T-cell (primary cell): ENCODE measurements at regions of chr17 and their contacts with region 1.

Region 1: DNA sequence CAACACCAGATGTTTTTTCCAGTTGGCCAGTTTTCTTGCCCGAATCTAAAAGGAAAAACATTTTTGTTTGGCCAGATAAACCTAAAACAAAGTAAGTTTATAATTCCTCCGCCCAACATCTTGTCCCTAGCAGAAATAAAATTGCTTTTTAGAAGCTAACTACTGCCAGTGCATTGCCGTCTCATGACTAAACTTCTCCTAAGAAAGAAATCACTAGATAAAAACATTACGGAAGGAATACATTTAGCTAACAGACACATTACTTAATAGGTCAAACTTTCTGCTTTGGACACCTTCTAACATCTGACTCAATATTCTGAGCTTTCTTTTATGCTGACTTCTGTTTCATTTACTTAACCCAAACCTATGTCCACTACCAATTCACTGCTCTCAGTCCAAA is 36.2 kb downstream of the FBXL20 start:
- DNase-seq: no peak
- ATAC-seq: no peak
- H3K4me3 ChIP-seq: no peak overlapping the region
- H3K4me3 Mint-ChIP-seq: no peak overlapping the region
- H3K27ac ChIP-seq: no peak overlapping the region
- H3K27ac Mint-ChIP-seq: no peak overlapping the region
- H3K4me1 ChIP-seq: no peaks in the 10 kb centered on the region
- H3K4me1 Mint-ChIP-seq: peaks cover 26 to 27% (median 27%) of the 10 kb centered on the region in 3 donors
- H3K27me3 ChIP-seq: no peaks in the 10 kb centered on the region
- H3K27me3 Mint-ChIP-seq: no peaks in the 10 kb centered on the region

Region 2: DNA sequence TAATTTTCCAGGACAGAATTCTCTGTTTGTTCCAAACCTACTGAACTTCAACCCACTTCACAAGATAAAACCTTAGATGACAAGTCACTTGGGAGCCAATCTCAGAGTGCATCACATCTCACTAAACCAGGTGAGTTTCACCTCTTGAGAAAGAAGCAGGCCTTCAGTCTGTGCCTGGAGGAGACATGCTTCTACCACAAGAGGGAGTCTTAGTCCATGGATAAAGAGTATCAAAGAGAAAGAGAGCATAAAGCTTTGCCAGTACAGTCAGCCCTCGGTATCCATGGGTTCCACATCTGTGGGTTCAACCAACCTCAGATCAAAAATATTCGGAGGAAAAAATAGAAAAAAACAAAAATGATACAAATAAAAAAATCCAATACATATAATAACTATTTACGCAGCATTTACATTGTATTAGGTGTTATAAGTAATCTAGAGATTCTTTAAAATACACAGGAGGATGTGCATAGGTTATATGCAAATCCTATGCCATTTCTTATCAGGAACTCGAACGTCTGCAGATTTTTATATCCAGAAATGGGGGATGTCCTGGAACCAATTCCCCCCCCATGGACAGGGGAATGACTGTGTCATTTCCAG is 1837.9 kb before region 1 on chr17:
- CTCF ChIA-PET with region 1: interaction called in 1 of 2 experiments, 11 read pairs
- POLR2A ChIA-PET with region 1: no interaction called
- DNase-seq: peak in 9 of 35 experiments; percentile 2 to 63 (median 8)
- ATAC-seq: peak; percentile 49 to 72 (median 71)
- H3K4me3 ChIP-seq: no peak overlapping the region
- H3K4me3 Mint-ChIP-seq: no peak overlapping the region
- H3K27ac ChIP-seq: no peak overlapping the region
- H3K27ac Mint-ChIP-seq: peak overlapping the region; percentile 25 to 39
- H3K4me1 ChIP-seq: peaks cover 0 to 5% of the 10 kb centered on the region in 2 experiments
- H3K4me1 Mint-ChIP-seq: peaks cover 14 to 17% (median 16%) of the 10 kb centered on the region in 3 donors
- H3K27me3 ChIP-seq: no peaks in the 10 kb centered on the region
- H3K27me3 Mint-ChIP-seq: no peaks in the 10 kb centered on the region